ENCODE measurements at regions of chr7 and their contacts with region 1.

Region 1: DNA sequence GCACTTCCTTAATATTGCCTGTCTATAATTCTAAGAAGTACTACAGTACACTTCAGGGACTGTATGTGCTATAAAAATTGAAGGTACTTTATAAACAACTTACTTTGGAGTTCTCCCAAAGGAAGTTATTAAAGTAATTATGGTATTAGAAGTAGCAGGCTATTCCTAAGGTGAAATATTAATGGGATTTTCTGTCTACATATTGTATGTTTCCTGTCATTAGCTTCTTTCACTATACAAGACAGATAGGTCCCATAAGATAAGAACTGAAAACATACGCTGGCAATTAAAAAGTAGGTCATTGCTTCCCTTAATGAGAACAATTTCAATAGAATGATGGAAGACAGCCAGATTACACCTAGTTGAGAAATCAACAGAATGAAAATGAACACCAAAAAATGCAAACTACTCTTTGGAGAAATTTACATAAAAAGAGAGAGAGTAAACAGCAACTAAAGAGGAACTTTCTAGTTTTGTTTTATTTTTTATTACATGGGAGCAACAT is 147.0 kb downstream of the HBP1 start:
- DNase-seq: no peak
- H3K4me3 ChIP-seq: no peak overlapping the region
- H3K27ac ChIP-seq: no peak overlapping the region
- H3K4me1 ChIP-seq: no peaks in the 10 kb centered on the region
- H3K27me3 ChIP-seq: no peaks in the 10 kb centered on the region
- CTCF ChIP-seq: no peak
- EP300 ChIP-seq: no peak
- POLR2A ChIP-seq: no peak

Region 2: DNA sequence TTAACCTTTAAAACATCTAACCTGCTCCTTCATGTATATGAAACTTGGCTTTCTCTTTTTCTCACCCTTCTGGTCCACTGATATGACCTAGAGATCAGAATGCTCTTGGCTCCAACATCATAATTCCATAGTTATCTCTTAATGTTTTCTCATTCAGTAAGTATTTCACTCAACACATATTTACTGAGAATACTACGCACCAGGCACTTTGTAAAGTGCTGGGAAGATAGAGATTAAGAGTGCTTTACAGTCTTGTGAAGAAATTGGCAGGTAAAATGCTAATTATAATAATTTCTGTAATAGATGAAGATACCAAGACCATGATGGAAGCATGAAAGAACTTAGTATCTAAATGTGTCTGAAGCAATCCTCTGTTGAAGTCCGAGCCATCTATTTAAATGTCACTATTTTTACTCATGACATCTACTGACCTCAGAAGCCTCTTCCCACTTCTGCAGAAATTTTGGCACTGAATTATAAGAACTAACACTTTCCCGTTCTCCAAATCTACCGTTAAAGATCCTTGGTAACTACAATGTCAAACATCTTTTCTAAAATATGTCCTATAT is 30.8 kb before region 1 on chr7:
- intact Hi-C with region 1: loop called (anchors 2 kb)
- DNase-seq: no peak
- H3K4me3 ChIP-seq: no peak overlapping the region
- H3K27ac ChIP-seq: no peak overlapping the region
- H3K4me1 ChIP-seq: peaks cover 0 to 11% (median 0%) of the 10 kb centered on the region in 4 donors
- H3K27me3 ChIP-seq: no peaks in the 10 kb centered on the region
- CTCF ChIP-seq: no peak
- EP300 ChIP-seq: no peak
- POLR2A ChIP-seq: no peak

Region 3: GRCh38 chr7:107860981-107861652 is 545.3 kb after region 1 on chr7:
- intact Hi-C with region 1: no loop called
- DNase-seq: no peak
- H3K4me3 ChIP-seq: no peak overlapping the region
- H3K27ac ChIP-seq: peak overlapping the region in 2 of 4 donors; percentile 66 to 72
- H3K4me1 ChIP-seq: peaks cover 0 to 31% (median 26%) of the 10 kb centered on the region in 4 donors
- H3K27me3 ChIP-seq: no peaks in the 10 kb centered on the region
- CTCF ChIP-seq: no peak
- EP300 ChIP-seq: no peak
- POLR2A ChIP-seq: no peak